Naive thymus-derived CD4-positive, alpha-beta T cell (primary cell): ENCODE measurements at regions of chr11 and their contacts with region 1.

Region 1: DNA sequence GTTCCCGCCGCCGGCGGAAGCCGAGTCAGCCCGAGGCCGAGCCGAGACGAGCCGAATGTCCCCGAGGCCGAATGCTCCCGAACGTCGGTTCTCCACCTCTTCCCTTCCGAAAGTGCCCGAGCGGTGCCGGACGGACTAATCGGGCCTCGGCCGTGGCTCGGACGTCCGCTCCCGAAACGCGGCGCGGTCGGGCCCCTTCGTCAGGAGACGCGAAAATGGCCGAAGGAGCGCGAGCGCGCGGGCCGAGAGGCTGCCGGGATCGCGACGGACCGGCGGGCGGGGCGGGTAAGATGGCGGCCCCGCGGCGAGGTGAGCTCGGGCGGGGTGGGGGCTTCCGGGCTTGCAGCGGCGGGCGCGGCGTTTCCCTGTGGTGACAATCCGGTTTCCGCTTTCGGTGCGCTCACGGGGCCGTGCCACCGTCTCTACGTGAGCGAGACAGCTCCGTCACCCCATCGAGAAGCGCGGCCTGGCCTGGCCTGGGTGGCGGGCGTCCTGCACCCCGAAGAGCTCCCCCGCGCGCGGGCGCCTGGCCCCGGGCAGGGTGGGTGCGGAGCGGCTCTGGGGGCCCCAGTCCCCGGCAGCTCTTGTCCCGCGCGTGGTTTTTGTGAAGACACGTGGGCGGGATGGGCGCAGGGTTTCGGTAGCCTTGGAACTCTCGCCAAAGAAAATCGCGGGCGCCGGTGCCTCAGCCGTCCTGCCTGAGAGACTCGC is at the start of gene TMEM80:
- DNase-seq: peak; percentile 91 to 98 (median 98)
- ATAC-seq: peak; percentile 76
- H3K4me3 ChIP-seq: peak within 1 kb of the TSS; percentile 97
- H3K4me3 Mint-ChIP-seq: peak within 1 kb of the TSS; percentile 84 to 92 (median 89)
- H3K27ac ChIP-seq: peak within 1 kb of the TSS; percentile 100
- H3K27ac Mint-ChIP-seq: peak within 1 kb of the TSS; percentile 88 to 98 (median 95)
- H3K4me1 ChIP-seq: peaks cover 13 to 42% of the 10 kb centered on the region in 2 donors
- H3K4me1 Mint-ChIP-seq: peaks cover 40 to 56% (median 52%) of the 10 kb centered on the region in 7 donors
- H3K27me3 ChIP-seq: no peaks in the 10 kb centered on the region
- H3K27me3 Mint-ChIP-seq: no peaks in the 10 kb centered on the region
- total RNA-seq, gene TMEM80: 26.2 to 44.3 (median 40.4) TPM

Region 2: GRCh38 chr11:241634-242033 is 454.1 kb before region 1 on chr11:
- CTCF ChIA-PET with region 1: no interaction called
- POLR2A ChIA-PET with region 1: no interaction called
- intact Hi-C with region 1: no loop called
- DNase-seq: no peak
- ATAC-seq: no peak
- H3K4me3 ChIP-seq: no peak overlapping the region
- H3K4me3 Mint-ChIP-seq: no peak overlapping the region
- H3K27ac ChIP-seq: no peak overlapping the region
- H3K27ac Mint-ChIP-seq: peak overlapping the region in 7 of 9 donors; percentile 9 to 77 (median 41)
- H3K4me1 ChIP-seq: peaks cover 11 to 16% of the 10 kb centered on the region in 2 donors
- H3K4me1 Mint-ChIP-seq: peaks cover 23 to 55% (median 47%) of the 10 kb centered on the region in 7 donors
- H3K27me3 ChIP-seq: no peaks in the 10 kb centered on the region
- H3K27me3 Mint-ChIP-seq: no peaks in the 10 kb centered on the region

Region 3: GRCh38 chr11:416757-417621 is 278.7 kb before region 1 on chr11:
- CTCF ChIA-PET with region 1: no interaction called
- POLR2A ChIA-PET with region 1: interaction called, 3 read pairs
- intact Hi-C with region 1: loop called in 1 of 2 experiments (anchors 10 kb)
- DNase-seq: peak; percentile 34 to 71 (median 47)
- ATAC-seq: peak; percentile 38
- H3K4me3 ChIP-seq: peak overlapping the region; percentile 92
- H3K4me3 Mint-ChIP-seq: peak overlapping the region; percentile 48 to 100 (median 96)
- H3K27ac ChIP-seq: peak overlapping the region; percentile 75
- H3K27ac Mint-ChIP-seq: peak overlapping the region in 4 of 9 donors; percentile 68 to 78 (median 70)
- H3K4me1 ChIP-seq: peaks cover 11 to 21% of the 10 kb centered on the region in 2 donors
- H3K4me1 Mint-ChIP-seq: peaks cover 10 to 37% (median 17%) of the 10 kb centered on the region in 7 donors
- H3K27me3 ChIP-seq: no peaks in the 10 kb centered on the region
- H3K27me3 Mint-ChIP-seq: no peaks in the 10 kb centered on the region

Region 4: GRCh38 chr11:554824-555472 is 140.7 kb before region 1 on chr11:
- CTCF ChIA-PET with region 1: no interaction called
- POLR2A ChIA-PET with region 1: interaction called, 4 read pairs
- intact Hi-C with region 1: loop called in 1 of 2 experiments (anchors 1 kb)
- DNase-seq: peak; percentile 60 to 80 (median 72)
- ATAC-seq: peak; percentile 89
- H3K4me3 ChIP-seq: peak overlapping the region; percentile 46
- H3K4me3 Mint-ChIP-seq: peak overlapping the region in 7 of 10 donors; percentile 36 to 69 (median 57)
- H3K27ac ChIP-seq: peak overlapping the region; percentile 44
- H3K27ac Mint-ChIP-seq: no peak overlapping the region
- H3K4me1 ChIP-seq: peaks cover 9 to 16% of the 10 kb centered on the region in 2 donors
- H3K4me1 Mint-ChIP-seq: peaks cover 3 to 8% (median 7%) of the 10 kb centered on the region in 7 donors
- H3K27me3 ChIP-seq: no peaks in the 10 kb centered on the region
- H3K27me3 Mint-ChIP-seq: peaks cover 0 to 18% (median 0%) of the 10 kb centered on the region in 5 donors

Region 5: GRCh38 chr11:615504-616319 is 80.0 kb before region 1 on chr11 and contains the start of gene IRF7:
- CTCF ChIA-PET with region 1: no interaction called
- POLR2A ChIA-PET with region 1: interaction called, 4 read pairs
- intact Hi-C with region 1: loop called (anchors 1 kb)
- DNase-seq: peak; percentile 70 to 91 (median 76)
- ATAC-seq: peak; percentile 91
- H3K4me3 ChIP-seq: peak within 1 kb of the TSS; percentile 97
- H3K4me3 Mint-ChIP-seq: peak within 1 kb of the TSS; percentile 80 to 94 (median 92)
- H3K27ac ChIP-seq: peak within 1 kb of the TSS; percentile 95
- H3K27ac Mint-ChIP-seq: peak within 1 kb of the TSS; percentile 83 to 97 (median 93)
- H3K4me1 ChIP-seq: peaks cover 8 to 22% of the 10 kb centered on the region in 2 donors
- H3K4me1 Mint-ChIP-seq: peaks cover 0 to 22% (median 15%) of the 10 kb centered on the region in 7 donors
- H3K27me3 ChIP-seq: no peaks in the 10 kb centered on the region
- H3K27me3 Mint-ChIP-seq: no peaks in the 10 kb centered on the region
- total RNA-seq, gene IRF7: 57.0 to 134 (median 64.6) TPM

Region 6: GRCh38 chr11:655036-655726 is 40.5 kb before region 1 on chr11:
- CTCF ChIA-PET with region 1: no interaction called
- POLR2A ChIA-PET with region 1: no interaction called
- intact Hi-C with region 1: no loop called
- DNase-seq: no peak
- ATAC-seq: no peak
- H3K4me3 ChIP-seq: no peak overlapping the region
- H3K4me3 Mint-ChIP-seq: no peak overlapping the region
- H3K27ac ChIP-seq: no peak overlapping the region
- H3K27ac Mint-ChIP-seq: peak overlapping the region in 2 of 9 donors; percentile 17 to 76
- H3K4me1 ChIP-seq: no peaks in the 10 kb centered on the region
- H3K4me1 Mint-ChIP-seq: peaks cover 0 to 1% (median 0%) of the 10 kb centered on the region in 7 donors
- H3K27me3 ChIP-seq: no peaks in the 10 kb centered on the region
- H3K27me3 Mint-ChIP-seq: no peaks in the 10 kb centered on the region

Region 7: GRCh38 chr11:727859-728748 is 32.4 kb after region 1 on chr11:
- CTCF ChIA-PET with region 1: interaction called, 16 read pairs
- POLR2A ChIA-PET with region 1: interaction called, 9 read pairs
- intact Hi-C with region 1: loop called (anchors 1 kb)
- DNase-seq: peak; percentile 52 to 86 (median 71)
- ATAC-seq: peak; percentile 93
- H3K4me3 ChIP-seq: no peak overlapping the region
- H3K4me3 Mint-ChIP-seq: no peak overlapping the region
- H3K27ac ChIP-seq: no peak overlapping the region
- H3K27ac Mint-ChIP-seq: no peak overlapping the region
- H3K4me1 ChIP-seq: peaks cover 11 to 17% of the 10 kb centered on the region in 2 donors
- H3K4me1 Mint-ChIP-seq: peaks cover 4 to 11% (median 8%) of the 10 kb centered on the region in 7 donors
- H3K27me3 ChIP-seq: no peaks in the 10 kb centered on the region
- H3K27me3 Mint-ChIP-seq: peaks cover 0 to 8% (median 4%) of the 10 kb centered on the region in 5 donors

Region 8: DNA sequence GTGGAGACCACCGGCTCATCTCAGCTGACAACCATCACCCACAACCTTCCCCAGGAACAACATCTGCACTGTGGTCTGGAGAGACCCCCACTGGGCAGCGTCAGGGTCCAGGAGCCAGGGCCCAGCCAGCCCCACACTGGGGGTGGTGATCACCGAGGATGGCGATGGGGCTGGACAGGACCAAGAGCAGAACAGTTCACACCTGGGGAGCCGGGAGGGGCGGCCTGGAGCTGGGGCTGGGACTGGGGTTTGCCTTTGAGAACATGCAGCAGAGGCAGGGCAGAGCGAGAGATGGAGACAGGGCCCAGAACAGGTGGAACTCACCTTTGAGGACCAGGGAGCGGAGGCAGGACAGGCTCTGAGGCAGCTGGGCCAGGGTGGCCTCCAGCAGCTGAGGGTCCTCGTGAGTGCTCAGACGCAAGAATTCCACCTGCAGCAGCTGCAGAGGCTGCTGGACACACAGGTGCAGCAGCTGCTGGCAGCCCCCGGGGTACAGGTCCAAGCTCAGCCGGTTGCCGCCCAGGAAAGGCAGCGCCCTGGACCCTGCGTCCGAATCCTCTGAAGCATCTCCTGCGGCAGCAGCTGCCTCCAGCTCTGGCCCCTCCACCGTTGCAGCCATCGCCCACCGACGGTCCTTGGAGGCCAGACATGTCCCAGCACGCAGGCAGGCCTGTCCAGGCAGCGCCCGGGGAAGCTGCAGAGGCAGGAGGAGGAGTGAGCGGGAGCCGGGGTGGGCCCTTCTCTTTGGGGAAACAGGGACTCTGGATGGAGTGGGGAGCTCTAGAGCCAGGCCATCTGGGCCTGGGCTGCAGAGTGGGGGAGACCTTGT is 108.3 kb after region 1 on chr11:
- CTCF ChIA-PET with region 1: no interaction called
- POLR2A ChIA-PET with region 1: interaction called, 4 read pairs
- intact Hi-C with region 1: loop called in 1 of 2 experiments (anchors 2 kb)
- DNase-seq: no peak
- ATAC-seq: no peak
- H3K4me3 ChIP-seq: peak overlapping the region; percentile 66
- H3K4me3 Mint-ChIP-seq: peak overlapping the region; percentile 69 to 88 (median 78)
- H3K27ac ChIP-seq: peak overlapping the region; percentile 91
- H3K27ac Mint-ChIP-seq: peak overlapping the region in 4 of 9 donors; percentile 46 to 84 (median 72)
- H3K4me1 ChIP-seq: peaks cover 15 to 17% of the 10 kb centered on the region in 2 donors
- H3K4me1 Mint-ChIP-seq: peaks cover 0 to 25% (median 18%) of the 10 kb centered on the region in 7 donors
- H3K27me3 ChIP-seq: no peaks in the 10 kb centered on the region
- H3K27me3 Mint-ChIP-seq: no peaks in the 10 kb centered on the region